ENCODE measurements at regions of chr12 and their contacts with region 1.

Region 1: GRCh38 chr12:99658671-99659349 is 11.3 kb downstream of the GARIN6 start:
- DNase-seq: no peak
- H3K4me3 ChIP-seq: no peak overlapping the region
- H3K27ac ChIP-seq: no peak overlapping the region
- H3K4me1 ChIP-seq: no peaks in the 10 kb centered on the region
- H3K27me3 ChIP-seq: no peaks in the 10 kb centered on the region
- CTCF ChIP-seq: no peak
- POLR2A ChIP-seq: no peak

Region 2: GRCh38 chr12:100251917-100252316 is 593.1 kb after region 1 on chr12:
- intact Hi-C with region 1: no loop called
- DNase-seq: no peak
- H3K4me3 ChIP-seq: no peak overlapping the region
- H3K27ac ChIP-seq: no peak overlapping the region
- H3K4me1 ChIP-seq: no peaks in the 10 kb centered on the region
- H3K27me3 ChIP-seq: no peaks in the 10 kb centered on the region
- CTCF ChIP-seq: no peak
- POLR2A ChIP-seq: no peak

Region 3: DNA sequence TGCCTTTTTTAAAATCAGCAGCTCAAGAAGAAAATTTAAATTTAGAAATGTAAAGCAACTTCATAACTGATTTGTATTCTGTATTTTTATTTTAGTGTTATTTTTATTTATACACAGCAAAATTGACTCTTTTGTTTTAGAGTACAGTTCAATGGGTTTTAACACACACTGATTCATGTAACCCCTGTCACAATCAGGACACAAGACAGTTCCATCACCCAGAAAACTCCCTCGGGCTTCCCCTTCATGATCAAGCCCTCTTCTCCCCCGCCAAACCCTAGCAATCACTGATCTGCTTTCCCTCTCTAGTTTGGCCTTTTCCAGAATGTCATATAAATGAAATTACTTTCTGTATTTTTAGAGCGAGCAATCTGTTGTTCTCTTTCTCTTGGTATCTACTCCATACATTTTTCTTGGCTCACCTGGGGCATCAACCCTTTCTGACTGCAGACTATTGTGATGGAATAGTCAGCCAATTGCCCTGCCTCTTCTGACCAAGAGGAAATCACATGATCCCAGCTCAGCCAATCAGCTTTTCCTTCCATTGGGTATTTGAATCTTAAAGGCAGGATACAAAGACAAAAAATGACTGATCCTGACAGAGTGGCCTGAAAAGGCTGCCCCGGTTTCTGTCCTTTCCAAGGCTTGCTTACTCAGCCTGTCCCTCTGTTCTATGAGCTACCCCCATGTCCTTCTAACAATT is 1545.9 kb after region 1 on chr12:
- intact Hi-C with region 1: loop called (anchors 10 kb)
- DNase-seq: no peak
- H3K4me3 ChIP-seq: no peak overlapping the region
- H3K27ac ChIP-seq: no peak overlapping the region
- H3K4me1 ChIP-seq: no peaks in the 10 kb centered on the region
- H3K27me3 ChIP-seq: peaks cover 0 to 16% of the 10 kb centered on the region in 2 donors
- CTCF ChIP-seq: no peak
- POLR2A ChIP-seq: no peak